ENCODE measurements at regions of chr17 and their contacts with region 1.

Region 1: DNA sequence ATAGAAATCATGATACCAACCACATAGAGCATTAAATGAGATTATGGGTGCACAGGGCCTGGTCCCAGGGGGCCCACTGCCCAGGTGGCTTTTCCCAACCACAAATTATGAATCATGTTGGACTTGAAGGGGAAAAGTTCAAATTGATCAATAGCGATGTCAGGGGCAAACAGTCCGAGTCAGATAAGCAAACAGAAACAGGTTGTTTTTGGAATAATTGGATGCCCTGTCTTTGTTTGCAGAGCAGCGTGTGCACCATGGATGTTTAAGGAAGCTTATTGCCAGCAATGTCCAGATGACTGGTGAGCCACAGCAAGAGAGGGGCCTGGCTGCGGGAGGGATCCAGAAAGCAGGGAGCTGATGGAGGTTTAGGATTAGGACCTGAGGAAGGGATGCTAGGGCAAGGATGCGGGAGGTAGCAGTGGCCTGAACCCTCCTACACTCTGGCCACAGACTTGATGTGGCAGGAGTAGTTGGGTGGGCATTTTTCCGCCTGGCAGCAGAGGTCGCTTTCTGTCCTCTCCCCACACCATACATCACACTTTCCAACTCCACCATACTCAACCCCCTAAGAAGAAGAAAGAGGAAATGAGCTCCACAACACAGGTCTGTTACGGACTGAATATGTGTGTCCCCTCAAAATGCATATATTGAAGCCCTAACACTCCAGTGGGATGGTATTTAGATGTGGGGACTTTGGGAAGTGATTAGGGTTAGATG is 266.4 kb upstream of the RPL38 start:
- DNase-seq: no peak
- ATAC-seq: no peak
- H3K4me3 ChIP-seq: no peak overlapping the region
- H3K27ac ChIP-seq: no peak overlapping the region
- H3K4me1 ChIP-seq: no peaks in the 10 kb centered on the region
- H3K27me3 ChIP-seq: no peaks in the 10 kb centered on the region
- CTCF ChIP-seq: no peak
- POLR2A ChIP-seq: no peak

Region 2: DNA sequence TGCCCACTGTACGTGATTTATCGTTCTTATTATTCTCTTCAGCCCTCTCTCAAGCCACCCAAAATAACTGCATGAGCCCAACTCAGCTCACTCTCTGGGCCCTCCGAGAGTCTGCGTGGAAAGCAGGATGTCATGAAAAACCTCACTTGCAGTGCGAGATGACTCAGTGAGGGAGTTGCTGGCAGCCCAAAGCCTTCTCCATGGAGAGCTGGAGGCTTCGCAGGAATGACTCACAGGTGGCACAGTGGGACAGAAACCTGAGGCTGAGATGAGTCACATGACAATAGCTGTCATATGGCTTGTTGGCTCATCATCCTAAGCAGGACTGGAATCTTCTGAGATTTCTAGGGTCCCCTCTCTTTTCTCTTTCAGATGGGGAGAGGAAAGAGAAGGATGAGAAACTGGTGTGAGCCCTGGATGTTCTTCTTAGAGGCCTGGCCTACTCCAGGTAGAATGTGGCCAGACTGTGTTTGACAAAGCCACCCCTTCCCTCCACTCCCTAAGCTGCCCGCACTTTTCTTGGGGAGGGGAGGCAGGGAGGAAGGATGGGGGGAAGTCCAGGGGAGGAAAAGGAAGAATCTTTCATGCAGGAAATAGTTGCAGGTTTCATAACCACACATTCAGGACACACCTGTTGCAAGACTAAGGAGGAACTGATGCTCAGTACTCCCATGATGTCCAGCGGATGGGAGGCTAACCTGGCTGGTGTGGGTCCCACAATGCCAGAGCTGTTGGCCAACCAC is 105.8 kb after region 1 on chr17:
- in situ Hi-C with region 1: loop called in 1 of 4 experiments (anchors 25 kb)
- intact Hi-C with region 1: no loop called
- DNase-seq: peak in 1 of 2 donors; percentile 52
- ATAC-seq: peak; percentile 88 to 91
- H3K4me3 ChIP-seq: no peak overlapping the region
- H3K27ac ChIP-seq: no peak overlapping the region
- H3K4me1 ChIP-seq: peaks cover 0 to 3% of the 10 kb centered on the region in 2 donors
- H3K27me3 ChIP-seq: peaks cover 0 to 2% (median 0%) of the 10 kb centered on the region in 3 donors
- CTCF ChIP-seq: no peak
- POLR2A ChIP-seq: no peak